ENCODE measurements at regions of chr10 and their contacts with region 1.

Region 1: DNA sequence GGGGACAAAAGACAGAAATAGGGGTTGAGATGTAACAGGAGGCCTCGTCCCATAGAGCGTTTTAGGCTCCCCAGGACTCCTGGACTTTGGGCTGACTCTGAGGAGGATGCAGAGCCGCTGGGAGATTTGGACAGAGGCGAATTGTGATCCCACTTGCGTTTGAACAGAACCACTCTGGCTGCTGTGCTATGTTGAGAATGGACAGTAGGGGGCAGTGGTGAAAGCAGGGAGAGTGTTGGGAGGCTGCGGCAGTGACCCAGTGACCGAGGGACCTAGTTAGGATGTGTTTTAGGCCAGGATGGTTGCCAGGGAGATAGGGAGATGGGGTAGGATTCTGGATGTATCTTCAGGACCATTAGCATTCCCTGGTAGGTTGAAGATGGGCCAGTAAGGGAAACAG is 271.6 kb downstream of the CCDC3 start:
- DNase-seq: no peak
- ATAC-seq: no peak
- H3K4me3 ChIP-seq: no peak overlapping the region
- H3K4me1 ChIP-seq: no peaks in the 10 kb centered on the region
- CTCF ChIP-seq: no peak

Region 2: GRCh38 chr10:12513775-12514673 is 215.9 kb before region 1 on chr10:
- intact Hi-C with region 1: no loop called
- DNase-seq: no peak
- ATAC-seq: no peak
- H3K4me3 ChIP-seq: peak overlapping the region; percentile 3
- H3K4me1 ChIP-seq: peaks cover 3% of the 10 kb centered on the region
- CTCF ChIP-seq: no peak

Region 3: GRCh38 chr10:12675186-12675585 is 54.7 kb before region 1 on chr10:
- intact Hi-C with region 1: no loop called
- DNase-seq: no peak
- ATAC-seq: no peak
- H3K4me3 ChIP-seq: no peak overlapping the region
- H3K4me1 ChIP-seq: no peaks in the 10 kb centered on the region
- CTCF ChIP-seq: no peak

Region 4: DNA sequence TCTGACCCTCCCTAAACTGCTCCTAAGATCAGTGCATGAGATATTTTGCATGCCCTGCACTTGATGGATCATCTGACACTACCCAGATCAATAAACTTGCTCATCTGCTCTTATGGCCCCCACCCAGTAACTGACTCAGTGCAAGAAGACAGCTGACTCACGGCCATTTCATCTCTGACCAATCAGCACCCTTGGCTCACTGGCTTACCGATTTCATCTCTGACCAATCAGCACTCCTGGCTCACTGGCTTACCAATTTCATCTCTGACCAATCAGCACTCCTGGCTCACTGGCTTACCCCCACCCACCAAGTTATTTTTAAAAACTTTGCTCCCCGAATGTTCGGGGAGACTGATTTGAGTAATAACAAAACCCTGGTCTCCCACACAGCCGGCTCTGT is 332.9 kb after region 1 on chr10:
- intact Hi-C with region 1: loop called in 1 of 2 experiments (anchors 10 kb)
- DNase-seq: no peak
- ATAC-seq: no peak
- H3K4me3 ChIP-seq: no peak overlapping the region
- H3K4me1 ChIP-seq: no peaks in the 10 kb centered on the region
- CTCF ChIP-seq: no peak

Region 5: GRCh38 chr10:13160934-13161856 is 431.3 kb after region 1 on chr10 and contains the start of gene MCM10:
- intact Hi-C with region 1: no loop called
- DNase-seq: peak; percentile 97 to 100 (median 97)
- ATAC-seq: peak; percentile 100
- H3K4me3 ChIP-seq: peak within 1 kb of the TSS; percentile 17
- H3K4me1 ChIP-seq: peaks cover 17% of the 10 kb centered on the region
- CTCF ChIP-seq: peak; percentile 75
- total RNA-seq, gene MCM10: 1.6 to 8.6 (median 2.2) TPM

Measured in mucosa of descending colon (tissue), 3 donors.